A549 (cell line): ENCODE measurements at regions of chr10 and their contacts with region 1.

Region 1: GRCh38 chr10:93515071-93516005 is 18.9 kb downstream of the CEP55 start:
- DNase-seq: no peak
- ATAC-seq: no peak
- H3K4me3 ChIP-seq: no peak overlapping the region
- H3K27ac ChIP-seq: no peak overlapping the region
- H3K4me1 ChIP-seq: no peaks in the 10 kb centered on the region
- CTCF ChIP-seq: no peak
- EP300 ChIP-seq: no peak
- POLR2A ChIP-seq: no peak
- RAD21 ChIP-seq: no peak

Region 2: DNA sequence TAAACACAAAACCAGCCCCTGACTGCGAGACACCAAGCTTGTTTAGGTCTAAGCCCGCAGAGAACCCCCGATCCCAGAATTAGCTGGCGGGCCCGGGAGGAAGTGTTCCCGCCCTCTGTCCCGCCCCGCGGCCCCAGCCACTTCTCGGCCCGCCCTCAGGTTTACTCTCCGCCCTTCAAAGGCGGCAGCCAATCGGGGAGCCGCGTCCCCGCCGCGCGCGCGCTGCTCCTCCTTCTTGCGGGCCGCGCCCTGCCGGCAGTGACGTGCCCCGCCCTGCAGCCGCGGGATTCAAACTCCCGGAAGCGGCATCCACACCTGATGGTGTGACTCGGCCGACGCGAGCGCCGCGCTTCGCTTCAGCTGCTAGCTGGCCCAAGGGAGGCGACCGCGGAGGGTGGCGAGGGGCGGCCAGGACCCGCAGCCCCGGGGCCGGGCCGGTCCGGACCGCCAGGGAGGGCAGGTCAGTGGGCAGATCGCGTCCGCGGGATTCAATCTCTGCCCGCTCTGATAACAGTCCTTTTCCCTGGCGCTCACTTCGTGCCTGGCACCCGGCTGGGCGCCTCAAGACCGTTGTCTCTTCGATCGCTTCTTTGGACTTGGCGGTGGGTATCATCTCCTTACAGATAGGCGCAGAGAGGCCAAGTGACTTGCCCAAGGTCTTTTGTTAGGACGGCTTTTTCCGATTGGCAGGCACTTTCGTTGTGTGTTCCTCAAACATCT is 18.9 kb before region 1 on chr10 and contains the start of gene CEP55:
- CTCF ChIA-PET with region 1: interaction called, 42 read pairs
- POLR2A ChIA-PET with region 1: no interaction called
- DNase-seq: peak; percentile 84 to 96
- ATAC-seq: peak; percentile 97 to 99
- H3K4me3 ChIP-seq: peak within 1 kb of the TSS; percentile 48
- H3K27ac ChIP-seq: peak within 1 kb of the TSS; percentile 79 to 90
- H3K4me1 ChIP-seq: peaks cover 20% of the 10 kb centered on the region
- CTCF ChIP-seq: no peak
- EP300 ChIP-seq: no peak
- POLR2A ChIP-seq: peak; percentile 55
- RAD21 ChIP-seq: no peak
- polyA plus RNA-seq, gene CEP55: 63.5 and 87.0 TPM in 2 replicates

Region 3: GRCh38 chr10:93503075-93503474 is 12.3 kb before region 1 on chr10:
- CTCF ChIA-PET with region 1: interaction called, 42 read pairs
- POLR2A ChIA-PET with region 1: no interaction called
- DNase-seq: no peak
- ATAC-seq: no peak
- H3K4me3 ChIP-seq: no peak overlapping the region
- H3K27ac ChIP-seq: no peak overlapping the region
- H3K4me1 ChIP-seq: peaks cover 14% of the 10 kb centered on the region; the same call in 2 of the 3 replicates
- CTCF ChIP-seq: no peak
- EP300 ChIP-seq: no peak
- POLR2A ChIP-seq: no peak
- RAD21 ChIP-seq: no peak

Region 4: DNA sequence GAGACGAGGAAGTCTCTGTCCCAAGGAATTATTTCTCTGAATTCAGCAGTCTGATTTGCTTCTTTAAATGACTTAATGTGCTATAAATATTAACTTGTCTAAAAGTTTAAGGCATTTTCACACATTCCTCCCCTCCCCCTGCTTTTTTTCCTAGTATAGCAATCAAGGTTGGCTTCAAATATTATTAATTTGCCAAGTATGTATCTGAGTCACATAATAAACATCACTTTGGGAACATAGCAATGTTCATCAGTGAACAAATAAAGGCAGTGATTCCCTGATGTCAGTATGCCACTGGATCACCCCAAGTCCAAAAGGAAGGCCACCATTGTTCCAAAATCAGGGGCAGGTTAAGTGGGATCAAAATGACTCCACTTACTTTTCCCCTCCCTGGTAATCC is 137.5 kb after region 1 on chr10:
- CTCF ChIA-PET with region 1: no interaction called
- POLR2A ChIA-PET with region 1: no interaction called
- DNase-seq: no peak
- ATAC-seq: no peak
- H3K4me3 ChIP-seq: no peak overlapping the region
- H3K27ac ChIP-seq: no peak overlapping the region
- H3K4me1 ChIP-seq: peaks cover 14% of the 10 kb centered on the region
- CTCF ChIP-seq: no peak
- EP300 ChIP-seq: no peak
- POLR2A ChIP-seq: no peak
- RAD21 ChIP-seq: no peak